PC-3 (cell line): ENCODE measurements at regions of chr15 and their contacts with region 1.

Region 1: GRCh38 chr15:89430530-89431341 is 65.6 kb downstream of the RHCG start:
- DNase-seq: peak; percentile 88
- ATAC-seq: peak; percentile 95
- H3K4me3 ChIP-seq: peak overlapping the region; percentile 81
- H3K27ac ChIP-seq: no peak overlapping the region
- H3K4me1 ChIP-seq: peaks cover 13% of the 10 kb centered on the region
- H3K27me3 ChIP-seq: no peaks in the 10 kb centered on the region
- CTCF ChIP-seq: peak; percentile 92

Region 2: GRCh38 chr15:89034288-89034687 is 396.4 kb before region 1 on chr15:
- CTCF ChIA-PET with region 1: interaction called, 11 read pairs
- POLR2A ChIA-PET with region 1: no interaction called
- intact Hi-C with region 1: no loop called
- DNase-seq: peak; percentile 60
- ATAC-seq: peak; percentile 37
- H3K4me3 ChIP-seq: no peak overlapping the region
- H3K27ac ChIP-seq: no peak overlapping the region
- H3K4me1 ChIP-seq: no peaks in the 10 kb centered on the region
- H3K27me3 ChIP-seq: 0 out of 2 replicates have a peak, but pooled peaks cover 3% of the 10 kb centered on the region
- CTCF ChIP-seq: peak; percentile 75

Region 3: DNA sequence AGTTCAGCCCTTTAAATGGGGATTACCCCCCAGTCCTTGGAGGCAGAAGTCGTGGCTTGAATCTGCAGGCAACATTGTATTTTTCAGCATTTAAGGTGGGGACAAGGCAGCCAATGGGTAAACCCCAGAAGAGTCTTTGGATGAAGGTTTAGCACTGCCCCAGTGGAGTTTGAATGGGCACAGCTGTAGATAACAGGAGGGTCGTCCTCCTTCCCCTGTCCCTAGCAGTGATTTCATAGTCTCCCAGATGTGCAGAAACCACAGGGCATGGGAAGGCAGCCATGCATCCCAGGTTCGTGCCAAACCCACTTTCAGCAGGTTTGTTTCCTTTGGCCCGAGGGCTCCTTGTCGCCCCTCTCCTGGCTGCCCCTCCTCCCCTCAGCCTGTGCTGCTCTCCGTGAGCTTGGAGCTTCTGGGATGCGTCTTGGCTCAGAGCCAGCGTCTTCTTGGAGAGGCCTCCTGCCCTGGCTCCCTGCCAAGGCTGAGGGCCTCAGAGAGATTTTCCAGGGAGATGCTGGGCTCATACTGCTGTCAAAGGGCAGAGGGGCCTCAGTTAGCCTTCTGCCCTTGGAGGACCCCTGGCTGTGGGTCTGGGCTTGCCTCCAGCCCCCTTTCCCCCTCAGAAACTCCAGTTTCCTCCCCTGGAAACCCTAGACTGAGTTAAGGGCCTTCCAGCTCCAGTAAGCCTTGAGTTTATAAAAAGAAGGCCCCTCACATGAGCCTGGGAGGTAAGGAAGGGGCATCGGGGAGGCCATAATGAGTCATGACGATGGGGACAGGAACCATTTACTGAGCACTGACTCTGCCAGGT is 47.2 kb before region 1 on chr15:
- CTCF ChIA-PET with region 1: no interaction called
- POLR2A ChIA-PET with region 1: no interaction called
- intact Hi-C with region 1: no loop called
- DNase-seq: peak; percentile 81
- ATAC-seq: no peak
- H3K4me3 ChIP-seq: no peak overlapping the region
- H3K27ac ChIP-seq: peak overlapping the region; percentile 29
- H3K4me1 ChIP-seq: peaks cover 57% of the 10 kb centered on the region
- H3K27me3 ChIP-seq: no peaks in the 10 kb centered on the region
- CTCF ChIP-seq: no peak

Region 4: GRCh38 chr15:89455535-89455934 is 24.8 kb after region 1 on chr15:
- CTCF ChIA-PET with region 1: no interaction called
- POLR2A ChIA-PET with region 1: no interaction called
- intact Hi-C with region 1: no loop called
- DNase-seq: no peak
- ATAC-seq: no peak
- H3K4me3 ChIP-seq: no peak overlapping the region
- H3K27ac ChIP-seq: no peak overlapping the region
- H3K4me1 ChIP-seq: peaks cover 23% of the 10 kb centered on the region
- H3K27me3 ChIP-seq: no peaks in the 10 kb centered on the region
- CTCF ChIP-seq: no peak

Region 5: DNA sequence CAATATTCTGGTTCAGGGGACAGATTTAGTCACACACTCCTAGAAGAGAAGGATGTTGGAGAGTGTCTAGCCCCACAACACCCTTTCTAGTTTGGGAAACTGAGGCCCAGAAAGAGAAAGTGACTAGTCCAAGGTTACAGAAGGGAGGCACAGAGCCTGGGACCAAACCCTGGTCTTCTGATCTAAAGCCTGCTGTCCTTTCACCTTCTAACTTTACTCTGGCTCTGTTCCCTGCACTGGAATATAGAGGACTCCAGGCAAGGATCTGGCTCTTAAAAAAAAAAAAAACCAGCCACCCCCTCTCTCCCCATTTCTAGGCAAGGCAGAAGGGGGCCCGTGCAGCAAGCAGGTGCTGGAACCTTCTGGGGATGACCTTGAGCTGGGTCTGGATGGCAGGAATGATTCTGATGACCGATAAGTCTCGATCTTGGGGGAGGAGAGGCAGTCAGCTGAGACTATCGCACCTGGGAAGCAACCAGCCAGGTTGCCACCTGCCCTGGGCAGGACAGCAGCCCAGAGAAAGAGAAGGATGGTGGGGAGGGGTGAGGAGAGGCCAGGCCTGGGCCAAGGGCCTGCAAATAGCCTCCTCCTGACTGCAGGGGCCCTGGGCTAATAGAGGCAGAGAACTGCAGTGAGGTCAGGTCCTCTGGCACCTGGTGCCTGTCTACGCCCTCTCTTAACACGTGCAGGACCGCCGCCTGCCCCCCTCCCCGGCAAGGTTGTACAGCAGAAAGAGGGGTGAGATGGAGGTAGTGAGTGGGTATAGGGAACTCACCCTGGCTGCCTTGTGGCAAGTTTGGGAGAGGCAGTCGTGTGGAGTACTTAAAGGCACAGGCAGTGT is 96.1 kb after region 1 on chr15:
- CTCF ChIA-PET with region 1: no interaction called
- POLR2A ChIA-PET with region 1: no interaction called
- intact Hi-C with region 1: no loop called
- DNase-seq: no peak
- ATAC-seq: no peak
- H3K4me3 ChIP-seq: no peak overlapping the region
- H3K27ac ChIP-seq: no peak overlapping the region
- H3K4me1 ChIP-seq: peaks cover 2% of the 10 kb centered on the region; the same call in 1 of the 2 replicates
- H3K27me3 ChIP-seq: no peaks in the 10 kb centered on the region
- CTCF ChIP-seq: no peak